Body of pancreas (tissue), 4 donors: ENCODE measurements at regions of chr3 and their contacts with region 1.

Region 1: DNA sequence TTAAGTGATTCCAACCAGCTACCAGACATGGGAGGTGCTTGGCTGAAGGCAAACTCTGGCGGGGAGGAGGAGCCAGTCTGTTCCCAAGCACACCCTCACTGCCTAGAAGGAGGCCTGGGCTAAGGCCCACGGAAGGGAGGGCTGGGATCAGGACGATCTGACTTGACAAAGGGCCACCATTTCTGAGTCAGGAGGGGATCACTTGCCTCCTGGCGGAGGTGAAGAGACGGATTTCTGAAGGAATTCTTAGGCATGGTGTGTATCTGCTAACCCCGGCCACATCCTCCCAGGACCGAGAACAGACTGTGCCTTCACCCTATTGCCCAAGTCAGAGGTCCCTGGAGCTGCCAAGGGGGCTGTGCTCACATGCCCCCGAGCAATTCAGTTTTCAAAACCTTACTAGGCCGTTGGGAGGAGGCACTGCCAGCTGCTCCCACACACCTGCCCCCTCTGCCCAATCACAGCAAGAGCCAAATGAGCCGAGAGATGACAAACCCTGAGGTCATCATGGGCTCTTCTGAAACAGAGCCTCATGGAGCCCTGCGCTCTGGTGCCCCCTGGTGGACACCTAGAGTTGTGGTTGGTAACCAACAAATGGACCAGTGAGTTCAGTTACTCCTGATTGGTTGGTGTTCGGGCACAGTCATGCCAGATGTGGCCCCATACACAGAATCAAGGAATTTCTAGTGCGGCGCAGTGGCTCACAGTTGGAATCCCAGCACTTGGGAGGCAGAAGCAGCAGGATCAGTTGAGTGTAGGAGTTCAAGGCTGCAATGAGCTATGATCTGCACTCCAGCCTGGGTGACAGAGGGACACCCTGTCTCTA is 6.5 kb upstream of the TNK2 start:
- DNase-seq: peak; percentile 94 to 95 (median 94)
- ATAC-seq: peak; percentile 94
- H3K4me3 ChIP-seq: no peak overlapping the region
- H3K27ac ChIP-seq: peak overlapping the region in 3 of 4 donors; percentile 51 to 62 (median 58)
- H3K4me1 ChIP-seq: peaks cover 14% of the 10 kb centered on the region
- H3K27me3 ChIP-seq: no peaks in the 10 kb centered on the region
- CTCF ChIP-seq: peak; percentile 88 to 97 (median 95)
- POLR2A ChIP-seq: no peak

Region 2: GRCh38 chr3:195727606-195728195 is 187.2 kb before region 1 on chr3:
- intact Hi-C with region 1: no loop called
- DNase-seq: no peak
- ATAC-seq: no peak
- H3K4me3 ChIP-seq: no peak overlapping the region
- H3K27ac ChIP-seq: no peak overlapping the region
- H3K4me1 ChIP-seq: no peaks in the 10 kb centered on the region
- H3K27me3 ChIP-seq: no peaks in the 10 kb centered on the region
- CTCF ChIP-seq: no peak
- POLR2A ChIP-seq: no peak

Region 3: GRCh38 chr3:195868866-195869412 is 45.9 kb before region 1 on chr3:
- intact Hi-C with region 1: loop called (anchors 5 kb)
- DNase-seq: no peak
- ATAC-seq: no peak
- H3K4me3 ChIP-seq: no peak overlapping the region
- H3K27ac ChIP-seq: no peak overlapping the region
- H3K4me1 ChIP-seq: no peaks in the 10 kb centered on the region
- H3K27me3 ChIP-seq: no peaks in the 10 kb centered on the region
- CTCF ChIP-seq: no peak
- POLR2A ChIP-seq: no peak